HEK293 (cell line): ENCODE measurements at regions of chr17 and their contacts with region 1.

Region 1: DNA sequence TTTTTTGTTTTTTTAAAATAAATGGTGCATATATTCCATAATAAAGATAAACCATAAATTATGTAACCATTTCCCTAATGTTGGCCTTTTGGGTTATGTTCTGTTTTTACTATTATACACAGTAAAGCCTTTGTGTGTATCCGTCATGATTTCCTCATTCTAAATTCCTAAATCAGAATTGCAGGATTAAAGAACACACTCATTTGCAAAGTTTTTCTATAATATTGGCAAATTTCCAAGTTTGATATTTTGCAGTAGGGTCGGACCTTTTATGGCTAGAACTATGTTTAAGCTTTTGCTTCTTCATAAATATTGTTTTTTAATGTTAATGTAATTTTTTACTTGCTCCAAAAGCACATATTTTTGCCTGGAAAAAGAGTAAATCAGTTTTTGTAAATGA is 16.6 kb downstream of the GOSR1 start:
- H3K4me3 ChIP-seq: no peak overlapping the region
- H3K27ac ChIP-seq: no peak overlapping the region
- H3K4me1 ChIP-seq: no peaks in the 10 kb centered on the region
- CTCF ChIP-seq: no peak

Region 2: DNA sequence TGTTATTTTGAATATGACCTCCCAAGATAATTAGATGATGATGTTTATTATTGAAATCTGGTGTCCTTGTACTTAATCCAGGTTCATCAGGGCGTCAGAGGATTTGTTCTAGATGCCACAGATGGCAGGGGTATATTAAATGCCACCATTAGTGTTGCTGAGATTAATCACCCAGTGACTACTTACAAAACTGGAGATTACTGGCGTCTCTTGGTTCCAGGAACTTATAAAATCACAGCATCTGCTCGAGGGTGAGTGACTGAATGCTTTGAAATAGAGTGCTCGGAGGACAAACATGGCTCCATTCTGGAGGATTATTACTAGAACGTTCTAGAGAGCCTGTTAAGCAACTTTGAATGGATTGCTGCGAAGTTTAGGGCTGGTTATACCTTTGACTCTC is 50.1 kb before region 1 on chr17:
- CTCF ChIA-PET with region 1: no interaction called
- POLR2A ChIA-PET with region 1: no interaction called
- H3K4me3 ChIP-seq: no peak overlapping the region
- H3K27ac ChIP-seq: no peak overlapping the region
- H3K4me1 ChIP-seq: no peaks in the 10 kb centered on the region
- CTCF ChIP-seq: no peak

Region 3: GRCh38 chr17:30477083-30477773 is 16.6 kb before region 1 on chr17 and contains the start of gene GOSR1:
- CTCF ChIA-PET with region 1: interaction called, 12 read pairs
- POLR2A ChIA-PET with region 1: no interaction called
- H3K4me3 ChIP-seq: peak within 1 kb of the TSS; percentile 73
- H3K27ac ChIP-seq: peak within 1 kb of the TSS; percentile 77
- H3K4me1 ChIP-seq: peaks cover 5% of the 10 kb centered on the region; the same call in 1 of the 2 replicates
- CTCF ChIP-seq: peak; percentile 95

Region 4: DNA sequence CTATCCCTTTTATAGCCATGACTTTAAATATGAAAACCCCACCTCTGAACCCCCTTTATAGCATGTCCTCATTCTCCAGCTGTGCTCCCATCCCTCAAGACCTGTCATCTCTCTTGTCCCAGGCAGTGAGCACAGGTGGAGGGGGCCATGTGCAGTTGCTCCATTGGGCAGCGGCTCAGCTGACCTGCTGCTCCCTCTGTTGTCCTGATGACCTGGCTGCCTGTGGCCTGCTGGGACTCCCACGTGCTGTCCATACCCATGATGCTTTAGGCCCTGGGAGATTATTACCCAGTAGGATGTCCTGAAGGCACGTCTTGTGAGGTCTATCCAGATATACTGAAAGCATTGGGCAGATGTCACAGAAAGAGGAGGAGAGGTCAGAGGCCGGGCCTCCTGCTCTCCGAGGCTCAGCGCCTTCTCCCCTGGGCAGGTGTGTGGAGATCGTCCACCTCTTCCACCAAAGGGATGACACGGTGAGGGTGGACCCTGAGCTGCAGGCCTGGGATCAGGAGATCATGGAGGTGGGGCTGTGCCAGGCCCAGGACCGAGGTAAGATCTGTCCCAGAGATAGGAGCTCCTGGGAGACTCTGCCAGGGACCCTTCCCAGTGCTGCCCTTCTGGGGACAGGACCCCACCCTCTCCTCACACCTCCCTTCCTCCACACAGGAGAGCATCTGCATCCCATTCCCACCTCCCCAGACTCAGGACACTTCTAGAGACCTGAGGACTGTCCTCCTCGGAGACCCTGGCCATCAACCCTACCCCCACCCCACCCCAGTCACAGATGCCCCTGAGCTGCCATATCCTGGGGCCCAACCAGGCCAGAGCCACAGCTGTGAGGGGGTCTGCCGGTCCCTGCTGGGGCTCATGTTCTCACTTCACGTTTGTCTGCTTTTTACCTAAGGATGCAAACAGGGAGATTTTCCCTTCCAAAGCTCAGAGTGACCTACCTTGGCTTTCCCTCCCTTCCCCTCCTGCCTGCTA is 41.5 kb after region 1 on chr17:
- CTCF ChIA-PET with region 1: no interaction called
- POLR2A ChIA-PET with region 1: no interaction called
- H3K4me3 ChIP-seq: no peak overlapping the region
- H3K27ac ChIP-seq: no peak overlapping the region
- H3K4me1 ChIP-seq: peaks cover 12% of the 10 kb centered on the region
- CTCF ChIP-seq: no peak